Caco-2 (cell line): ENCODE measurements at regions of chr2 and their contacts with region 1.

Region 1: DNA sequence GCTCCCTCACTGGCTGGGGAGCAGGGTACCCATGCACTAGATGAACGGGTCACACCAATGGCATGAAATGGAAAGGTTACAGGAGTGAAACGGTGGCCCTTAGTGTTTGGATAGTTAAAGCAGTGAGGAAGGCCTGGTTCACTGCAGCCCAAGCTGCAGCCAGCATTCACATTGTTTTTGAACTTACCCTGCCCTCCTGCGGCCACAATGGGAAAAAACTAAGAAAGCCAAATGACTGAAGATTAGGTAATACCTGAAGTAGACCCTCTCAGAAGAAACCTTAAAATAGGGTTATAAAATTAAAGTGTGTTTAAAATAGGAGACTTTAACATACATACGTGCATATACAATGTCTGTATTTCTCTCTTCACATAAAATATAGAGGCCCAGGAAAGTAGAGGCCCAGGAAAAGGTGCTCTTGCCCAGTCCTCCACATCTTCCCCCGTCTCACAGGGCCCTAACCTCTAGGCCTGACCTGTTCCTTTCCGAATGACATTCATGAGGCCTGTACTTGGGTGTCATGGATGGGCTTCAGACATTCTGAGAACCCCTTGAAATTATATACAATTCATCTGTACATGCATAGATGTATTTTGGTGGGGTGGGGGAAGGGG is 33.3 kb downstream of the DOK1 start:
- DNase-seq: peak; percentile 71 to 75
- H3K4me3 ChIP-seq: no peak overlapping the region
- H3K4me3 Mint-ChIP-seq: no peak overlapping the region
- H3K27ac Mint-ChIP-seq: no peak overlapping the region
- H3K4me1 ChIP-seq: no peaks in the 10 kb centered on the region
- H3K4me1 Mint-ChIP-seq: peaks cover 22% of the 10 kb centered on the region
- H3K27me3 ChIP-seq: no peaks in the 10 kb centered on the region
- H3K27me3 Mint-ChIP-seq: peaks cover 4% of the 10 kb centered on the region
- CTCF ChIP-seq: peak; percentile 64 to 79

Region 2: DNA sequence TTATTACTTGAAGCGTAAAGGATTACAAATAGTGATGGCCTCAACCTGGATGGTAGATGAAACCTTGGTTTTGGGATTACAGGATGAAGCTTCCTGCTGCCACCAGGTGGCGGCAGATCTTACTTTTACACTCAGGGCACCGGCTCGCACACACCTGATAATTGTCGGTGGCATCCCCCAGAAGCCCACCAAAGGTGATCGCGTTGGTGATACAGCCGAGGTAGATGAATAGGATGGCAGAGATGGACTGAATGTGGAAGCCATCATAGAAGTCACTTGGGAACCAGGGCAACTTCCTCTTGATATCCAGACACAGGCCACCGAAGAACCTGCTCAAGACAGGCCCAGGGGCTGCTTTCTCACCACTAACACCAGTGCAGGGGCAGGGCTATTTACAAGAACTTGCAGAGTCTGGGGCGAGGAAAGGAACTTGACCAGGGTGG is 337.6 kb before region 1 on chr2:
- CTCF ChIA-PET with region 1: no interaction called
- POLR2A ChIA-PET with region 1: no interaction called
- intact Hi-C with region 1: loop called (anchors 5 kb)
- DNase-seq: peak; percentile 44 to 55
- H3K4me3 ChIP-seq: no peak overlapping the region
- H3K4me3 Mint-ChIP-seq: no peak overlapping the region
- H3K27ac Mint-ChIP-seq: no peak overlapping the region
- H3K4me1 ChIP-seq: no peaks in the 10 kb centered on the region
- H3K4me1 Mint-ChIP-seq: no peaks in the 10 kb centered on the region
- H3K27me3 ChIP-seq: no peaks in the 10 kb centered on the region
- H3K27me3 Mint-ChIP-seq: no peaks in the 10 kb centered on the region
- CTCF ChIP-seq: peak; percentile 85 to 86

Region 3: GRCh38 chr2:74286725-74287124 is 301.0 kb before region 1 on chr2:
- CTCF ChIA-PET with region 1: no interaction called
- POLR2A ChIA-PET with region 1: no interaction called
- intact Hi-C with region 1: no loop called
- DNase-seq: no peak
- H3K4me3 ChIP-seq: no peak overlapping the region
- H3K4me3 Mint-ChIP-seq: no peak overlapping the region
- H3K27ac Mint-ChIP-seq: no peak overlapping the region
- H3K4me1 ChIP-seq: no peaks in the 10 kb centered on the region
- H3K4me1 Mint-ChIP-seq: no peaks in the 10 kb centered on the region
- H3K27me3 ChIP-seq: no peaks in the 10 kb centered on the region
- H3K27me3 Mint-ChIP-seq: no peaks in the 10 kb centered on the region
- CTCF ChIP-seq: no peak

Region 4: GRCh38 chr2:74472086-74472944 is 115.5 kb before region 1 on chr2 and contains the start of gene MRPL53:
- CTCF ChIA-PET with region 1: no interaction called
- POLR2A ChIA-PET with region 1: no interaction called
- intact Hi-C with region 1: loop called (anchors 1 kb)
- DNase-seq: peak; percentile 97
- H3K4me3 ChIP-seq: peak within 1 kb of the TSS; percentile 65
- H3K4me3 Mint-ChIP-seq: peak within 1 kb of the TSS; percentile 93
- H3K27ac Mint-ChIP-seq: peak within 1 kb of the TSS; percentile 95
- H3K4me1 ChIP-seq: peaks cover 4% of the 10 kb centered on the region; the same call in 1 of the 2 replicates
- H3K4me1 Mint-ChIP-seq: peaks cover 8% of the 10 kb centered on the region
- H3K27me3 ChIP-seq: no peaks in the 10 kb centered on the region
- H3K27me3 Mint-ChIP-seq: no peaks in the 10 kb centered on the region
- CTCF ChIP-seq: no peak
- total RNA-seq, gene MRPL53: 88.4 and 102 TPM in 2 replicates

Region 5: GRCh38 chr2:74482801-74483674 is 104.7 kb before region 1 on chr2 and contains the starts of genes CCDC142 and TTC31:
- CTCF ChIA-PET with region 1: interaction called, 6 read pairs
- POLR2A ChIA-PET with region 1: no interaction called
- intact Hi-C with region 1: loop called (anchors 1 kb)
- DNase-seq: peak; percentile 95 to 96
- H3K4me3 ChIP-seq: peak within 1 kb of the TSS; percentile 76
- H3K4me3 Mint-ChIP-seq: peak within 1 kb of the TSS; percentile 82
- H3K27ac Mint-ChIP-seq: peak within 1 kb of the TSS; percentile 90
- H3K4me1 ChIP-seq: peaks cover 12% of the 10 kb centered on the region
- H3K4me1 Mint-ChIP-seq: peaks cover 25% of the 10 kb centered on the region
- H3K27me3 ChIP-seq: no peaks in the 10 kb centered on the region
- H3K27me3 Mint-ChIP-seq: no peaks in the 10 kb centered on the region
- CTCF ChIP-seq: peak; percentile 89 to 95
- total RNA-seq, gene CCDC142: 39.0 and 47.1 TPM in 2 replicates
- total RNA-seq, gene TTC31: 31.3 and 32.4 TPM in 2 replicates

Region 6: GRCh38 chr2:74507145-74507925 is 80.4 kb before region 1 on chr2 and contains the start of gene PCGF1:
- CTCF ChIA-PET with region 1: interaction called, 7 read pairs
- POLR2A ChIA-PET with region 1: no interaction called
- intact Hi-C with region 1: loop called (anchors 1 kb)
- DNase-seq: peak; percentile 98 to 99
- H3K4me3 ChIP-seq: peak within 1 kb of the TSS; percentile 68
- H3K4me3 Mint-ChIP-seq: peak within 1 kb of the TSS; percentile 91
- H3K27ac Mint-ChIP-seq: peak within 1 kb of the TSS; percentile 99
- H3K4me1 ChIP-seq: peaks cover 26% of the 10 kb centered on the region
- H3K4me1 Mint-ChIP-seq: peaks cover 28% of the 10 kb centered on the region
- H3K27me3 ChIP-seq: no peaks in the 10 kb centered on the region
- H3K27me3 Mint-ChIP-seq: no peaks in the 10 kb centered on the region
- CTCF ChIP-seq: peak; percentile 70 to 89
- total RNA-seq, gene PCGF1: 27.0 and 29.7 TPM in 2 replicates

Region 7: GRCh38 chr2:74529357-74530238 is 58.2 kb before region 1 on chr2 and contains the starts of genes AUP1 and HTRA2:
- CTCF ChIA-PET with region 1: interaction called, 5 read pairs
- POLR2A ChIA-PET with region 1: interaction called, 4 read pairs
- intact Hi-C with region 1: loop called (anchors 1 kb)
- DNase-seq: peak; percentile 99
- H3K4me3 ChIP-seq: peak within 1 kb of the TSS; percentile 78
- H3K4me3 Mint-ChIP-seq: peak within 1 kb of the TSS; percentile 99
- H3K27ac Mint-ChIP-seq: peak within 1 kb of the TSS; percentile 99
- H3K4me1 ChIP-seq: peaks cover 6% of the 10 kb centered on the region
- H3K4me1 Mint-ChIP-seq: peaks cover 18% of the 10 kb centered on the region
- H3K27me3 ChIP-seq: no peaks in the 10 kb centered on the region
- H3K27me3 Mint-ChIP-seq: no peaks in the 10 kb centered on the region
- CTCF ChIP-seq: no peak
- total RNA-seq, gene AUP1: 154 and 156 TPM in 2 replicates
- total RNA-seq, gene HTRA2: 27.0 and 27.3 TPM in 2 replicates

Region 8: GRCh38 chr2:74548900-74549826 is 38.6 kb before region 1 on chr2:
- CTCF ChIA-PET with region 1: interaction called, 3 read pairs
- POLR2A ChIA-PET with region 1: no interaction called
- intact Hi-C with region 1: loop called (anchors 1 kb)
- DNase-seq: peak; percentile 88 to 90
- H3K4me3 ChIP-seq: peak overlapping the region; percentile 74
- H3K4me3 Mint-ChIP-seq: peak overlapping the region; percentile 87
- H3K27ac Mint-ChIP-seq: peak overlapping the region; percentile 94
- H3K4me1 ChIP-seq: peaks cover 22% of the 10 kb centered on the region
- H3K4me1 Mint-ChIP-seq: peaks cover 13% of the 10 kb centered on the region
- H3K27me3 ChIP-seq: no peaks in the 10 kb centered on the region
- H3K27me3 Mint-ChIP-seq: no peaks in the 10 kb centered on the region
- CTCF ChIP-seq: no peak

Region 9: GRCh38 chr2:74603282-74604000 is 15.7 kb after region 1 on chr2:
- CTCF ChIA-PET with region 1: no interaction called
- POLR2A ChIA-PET with region 1: no interaction called
- intact Hi-C with region 1: no loop called
- DNase-seq: no peak
- H3K4me3 ChIP-seq: no peak overlapping the region
- H3K4me3 Mint-ChIP-seq: no peak overlapping the region
- H3K27ac Mint-ChIP-seq: no peak overlapping the region
- H3K4me1 ChIP-seq: no peaks in the 10 kb centered on the region
- H3K4me1 Mint-ChIP-seq: no peaks in the 10 kb centered on the region
- H3K27me3 ChIP-seq: no peaks in the 10 kb centered on the region
- H3K27me3 Mint-ChIP-seq: peaks cover 21% of the 10 kb centered on the region
- CTCF ChIP-seq: no peak

Region 10: DNA sequence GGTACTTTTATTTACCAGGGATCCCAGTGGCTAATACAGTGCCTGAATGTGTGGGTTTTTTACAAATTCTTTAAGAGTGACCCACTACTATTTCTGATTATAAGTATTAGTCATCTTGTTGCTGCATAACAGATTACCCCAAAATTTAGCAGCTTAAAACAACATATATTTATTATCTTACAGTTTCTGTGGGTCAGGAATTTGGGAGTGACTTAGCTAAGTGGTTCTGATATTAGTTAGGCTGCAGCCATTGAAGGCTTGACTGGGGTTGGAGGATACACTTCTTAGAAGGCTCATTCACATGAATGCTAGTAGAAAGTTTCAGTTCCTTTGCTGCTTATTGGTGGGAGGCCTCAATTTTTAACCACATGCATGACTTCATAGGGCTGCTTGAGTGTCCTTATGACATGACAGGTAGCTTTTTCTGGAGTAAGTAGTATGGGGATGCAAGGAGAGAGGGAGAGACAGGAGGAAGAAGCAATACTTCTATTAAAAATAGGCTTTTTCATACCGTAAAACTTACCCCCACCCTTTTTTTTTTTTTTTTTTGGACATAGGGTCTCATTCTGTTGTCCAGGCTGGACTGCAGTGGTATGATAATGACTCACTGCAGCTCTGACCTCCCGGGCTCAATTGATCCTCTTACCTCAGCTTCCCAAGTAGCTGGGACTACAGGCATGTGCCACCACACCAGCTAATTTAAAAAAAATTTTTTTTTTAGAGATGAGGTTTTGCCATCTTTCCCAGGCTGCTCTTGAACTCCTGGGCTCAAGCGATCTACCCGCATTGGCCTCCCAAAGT is 357.4 kb after region 1 on chr2:
- CTCF ChIA-PET with region 1: no interaction called
- POLR2A ChIA-PET with region 1: no interaction called
- intact Hi-C with region 1: no loop called
- DNase-seq: no peak
- H3K4me3 ChIP-seq: no peak overlapping the region
- H3K4me3 Mint-ChIP-seq: no peak overlapping the region
- H3K27ac Mint-ChIP-seq: no peak overlapping the region
- H3K4me1 ChIP-seq: peaks cover 52% of the 10 kb centered on the region
- H3K4me1 Mint-ChIP-seq: peaks cover 18% of the 10 kb centered on the region
- H3K27me3 ChIP-seq: no peaks in the 10 kb centered on the region
- H3K27me3 Mint-ChIP-seq: no peaks in the 10 kb centered on the region
- CTCF ChIP-seq: no peak